CD4-positive, alpha-beta memory T cell (primary cell): ENCODE measurements at regions of chr17 and their contacts with region 1.

Region 1: DNA sequence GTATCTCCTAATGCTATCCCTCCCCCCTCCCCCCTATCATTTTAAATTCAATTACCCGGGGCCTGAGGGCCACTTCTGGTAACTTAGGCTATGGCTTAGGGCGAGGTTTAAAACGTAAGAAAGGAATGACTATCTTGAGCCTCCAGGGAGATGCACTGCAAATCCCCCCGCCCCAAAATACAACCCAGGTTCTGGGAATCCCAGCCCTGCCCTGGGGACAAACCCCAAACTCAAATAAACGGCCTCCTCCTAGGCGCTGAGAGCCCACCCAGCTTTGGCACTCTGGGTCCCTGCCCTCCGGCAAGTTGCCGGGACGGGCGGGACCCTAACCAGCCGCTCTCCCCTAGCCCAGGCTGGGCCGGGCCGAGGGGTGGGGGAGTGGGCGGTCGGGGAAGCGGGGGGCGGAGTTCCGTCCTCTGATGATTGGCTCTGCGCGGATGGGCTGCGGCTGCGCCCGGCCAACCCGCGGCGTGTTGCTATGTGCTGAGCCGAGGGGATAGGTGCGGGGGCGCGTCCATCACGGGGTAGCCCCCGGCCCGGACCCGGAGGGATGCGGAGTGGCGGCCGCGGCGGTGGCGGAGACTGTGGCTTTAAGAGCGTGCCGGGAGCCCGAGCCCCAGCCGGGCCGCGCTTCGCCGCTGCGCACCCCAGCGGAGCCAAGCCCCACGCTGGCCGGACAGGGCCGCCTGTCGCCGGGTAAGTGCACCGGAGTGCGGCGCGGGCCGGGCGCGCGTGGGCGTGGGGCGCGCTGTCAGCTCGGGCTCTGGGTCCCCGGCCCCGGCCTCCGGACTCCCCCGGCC is at the start of gene YPEL2:
- DNase-seq: peak; percentile 86 to 90 (median 88)
- H3K4me3 ChIP-seq: peak within 1 kb of the TSS; percentile 53 to 73
- H3K4me3 Mint-ChIP-seq: peak within 1 kb of the TSS; percentile 90 to 94 (median 93)
- H3K27ac ChIP-seq: peak within 1 kb of the TSS; percentile 62
- H3K27ac Mint-ChIP-seq: peak within 1 kb of the TSS; percentile 86 to 94 (median 92)
- H3K4me1 ChIP-seq: peaks cover 79% of the 10 kb centered on the region
- H3K4me1 Mint-ChIP-seq: peaks cover 53 to 83% (median 64%) of the 10 kb centered on the region in 4 donors
- H3K27me3 ChIP-seq: no peaks in the 10 kb centered on the region
- H3K27me3 Mint-ChIP-seq: no peaks in the 10 kb centered on the region
- total RNA-seq, gene YPEL2: 42.2 to 42.4 TPM

Region 2: DNA sequence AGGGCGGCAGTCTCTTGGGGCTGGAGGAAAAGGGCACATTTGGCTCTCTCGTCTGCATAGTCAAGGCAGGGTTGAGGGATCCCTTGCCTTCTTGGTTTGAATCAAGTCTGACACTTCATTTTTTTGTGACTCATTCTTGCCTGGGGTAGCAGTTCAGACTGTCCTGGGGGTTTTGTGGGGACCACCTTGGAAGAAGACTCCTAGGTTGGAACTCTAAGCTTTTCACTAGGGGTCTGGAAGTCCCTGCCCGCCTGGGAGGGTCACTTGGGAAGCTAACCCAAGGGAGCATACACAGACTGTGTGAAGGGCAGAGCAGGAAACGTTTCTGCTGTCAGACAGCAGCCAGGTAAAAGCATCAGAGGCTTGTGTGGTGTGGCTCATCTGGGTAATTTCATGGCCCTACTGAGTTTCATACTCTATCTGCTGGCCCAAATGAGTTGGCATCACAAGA is 11.4 kb after region 1 on chr17:
- CTCF ChIA-PET with region 1: interaction called, 6 read pairs
- POLR2A ChIA-PET with region 1: interaction called, 10 read pairs
- intact Hi-C with region 1: no loop called
- DNase-seq: no peak
- H3K4me3 ChIP-seq: no peak overlapping the region
- H3K4me3 Mint-ChIP-seq: peak overlapping the region in 3 of 8 donors; percentile 0 to 16 (median 4)
- H3K27ac ChIP-seq: no peak overlapping the region
- H3K27ac Mint-ChIP-seq: peak overlapping the region in 5 of 7 donors; percentile 1 to 80 (median 19)
- H3K4me1 ChIP-seq: peaks cover 26% of the 10 kb centered on the region
- H3K4me1 Mint-ChIP-seq: peaks cover 45 to 68% (median 59%) of the 10 kb centered on the region in 4 donors
- H3K27me3 ChIP-seq: no peaks in the 10 kb centered on the region
- H3K27me3 Mint-ChIP-seq: no peaks in the 10 kb centered on the region

Region 3: DNA sequence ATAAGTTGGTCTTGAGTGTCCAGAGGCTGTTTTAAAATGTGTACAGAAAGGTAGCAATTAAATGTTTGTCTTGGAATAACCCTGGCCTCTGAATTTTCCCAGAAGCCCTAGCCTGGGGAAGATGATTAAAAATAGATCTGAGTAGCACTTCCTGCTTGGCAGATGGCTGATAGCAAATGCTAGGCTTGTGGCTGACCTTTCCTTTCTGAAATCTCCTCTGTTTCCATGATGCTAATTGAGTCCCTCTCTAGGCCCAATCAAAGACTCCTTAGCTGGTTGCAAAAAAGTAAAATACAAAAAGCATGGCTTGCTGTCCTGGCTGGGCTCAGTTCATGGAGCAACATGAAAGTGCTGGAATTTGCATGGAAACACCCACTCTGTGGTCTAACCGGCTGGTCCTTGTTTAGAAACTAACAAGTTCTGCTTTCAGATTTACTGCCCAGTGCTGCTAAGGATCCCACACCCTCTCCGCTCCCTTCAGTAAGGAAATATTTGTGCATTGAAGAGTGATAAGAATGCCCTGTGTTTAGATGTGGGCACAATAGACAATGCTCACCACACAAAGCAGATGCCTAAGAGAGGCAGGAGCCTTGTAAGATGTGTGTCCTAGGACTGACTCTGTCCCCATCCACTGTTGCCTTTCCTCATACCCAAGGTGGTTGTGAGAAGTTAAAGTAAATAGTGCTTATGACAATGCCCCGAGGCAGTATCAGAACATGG is 41.0 kb after region 1 on chr17:
- CTCF ChIA-PET with region 1: interaction called, 12 read pairs
- POLR2A ChIA-PET with region 1: interaction called, 12 read pairs
- intact Hi-C with region 1: no loop called
- DNase-seq: no peak
- H3K4me3 ChIP-seq: no peak overlapping the region
- H3K4me3 Mint-ChIP-seq: peak overlapping the region in 7 of 8 donors; percentile 20 to 65 (median 23)
- H3K27ac ChIP-seq: no peak overlapping the region
- H3K27ac Mint-ChIP-seq: peak overlapping the region; percentile 56 to 82 (median 69)
- H3K4me1 ChIP-seq: peaks cover 78% of the 10 kb centered on the region
- H3K4me1 Mint-ChIP-seq: peaks cover 54 to 82% (median 72%) of the 10 kb centered on the region in 4 donors
- H3K27me3 ChIP-seq: no peaks in the 10 kb centered on the region
- H3K27me3 Mint-ChIP-seq: no peaks in the 10 kb centered on the region

Region 4: GRCh38 chr17:59435238-59435637 is 103.9 kb after region 1 on chr17:
- CTCF ChIA-PET with region 1: interaction called, 145 read pairs
- POLR2A ChIA-PET with region 1: interaction called, 23 read pairs
- intact Hi-C with region 1: loop called (anchors 1 kb)
- DNase-seq: no peak
- H3K4me3 ChIP-seq: no peak overlapping the region
- H3K4me3 Mint-ChIP-seq: no peak overlapping the region
- H3K27ac ChIP-seq: no peak overlapping the region
- H3K27ac Mint-ChIP-seq: no peak overlapping the region
- H3K4me1 ChIP-seq: peaks cover 11% of the 10 kb centered on the region
- H3K4me1 Mint-ChIP-seq: peaks cover 5 to 15% (median 13%) of the 10 kb centered on the region in 4 donors
- H3K27me3 ChIP-seq: no peaks in the 10 kb centered on the region
- H3K27me3 Mint-ChIP-seq: peaks cover 3 to 7% of the 10 kb centered on the region in 2 donors